Naive thymus-derived CD8-positive, alpha-beta T cell (primary cell): ENCODE measurements at regions of chr16 and their contacts with region 1.

Region 1: DNA sequence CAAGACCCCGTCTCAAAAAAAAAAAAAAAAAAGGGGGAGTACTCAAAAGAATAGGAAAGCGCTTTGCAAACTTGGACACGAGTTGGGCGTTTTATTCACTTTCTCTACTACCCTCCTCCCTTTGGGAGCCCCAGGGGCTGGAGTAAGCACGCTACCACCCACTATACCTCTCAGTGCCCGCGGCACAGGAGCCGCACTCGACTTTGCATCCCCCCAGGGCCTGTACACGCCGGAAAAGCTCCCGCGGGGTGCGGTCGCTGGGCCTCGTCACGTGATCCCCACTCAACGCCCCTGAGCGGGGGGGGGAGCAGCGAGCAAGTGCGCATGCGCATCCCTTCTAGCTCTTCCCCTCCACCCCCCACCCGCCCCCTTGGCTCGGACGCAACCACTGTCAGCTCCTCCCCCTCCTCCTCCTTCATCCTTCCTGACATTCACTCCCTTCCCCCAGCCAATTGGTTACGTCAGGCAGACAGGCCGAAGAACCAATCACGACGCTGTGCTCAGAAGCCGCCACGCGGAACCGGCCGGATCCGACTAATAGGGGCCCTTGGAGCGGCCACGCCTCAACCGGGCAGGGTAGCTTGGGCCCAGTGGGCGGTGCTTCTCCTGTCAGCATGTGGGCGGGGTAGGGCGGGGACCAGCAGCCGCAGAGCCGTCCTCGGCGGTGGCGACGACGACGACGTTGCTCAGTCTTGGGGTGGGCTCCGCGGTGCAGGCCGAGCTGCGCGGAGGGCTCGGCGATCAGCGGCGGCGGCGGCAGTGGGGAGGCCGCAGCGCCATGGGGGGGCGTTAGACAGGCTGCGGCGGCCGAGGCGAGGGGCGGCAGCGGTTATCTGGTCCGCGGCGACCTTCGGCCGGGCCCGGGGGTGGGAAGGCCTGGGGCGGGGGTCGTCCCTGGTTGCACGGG is at the start of gene HAPSTR1:
- DNase-seq: peak; percentile 91 to 100 (median 100)
- ATAC-seq: peak; percentile 84 to 89
- H3K4me3 Mint-ChIP-seq: peak within 1 kb of the TSS; percentile 95 to 100 (median 98)
- H3K27ac Mint-ChIP-seq: peak within 1 kb of the TSS; percentile 92 to 99 (median 99)
- H3K4me1 Mint-ChIP-seq: peaks cover 23 to 44% (median 36%) of the 10 kb centered on the region in 4 donors
- H3K27me3 Mint-ChIP-seq: peaks cover 0 to 4% (median 0%) of the 10 kb centered on the region in 5 donors
- polyA plus RNA-seq, gene HAPSTR1: 9.9 to 16.5 (median 10.6) TPM

Region 2: GRCh38 chr16:8868416-8869211 is 222.6 kb before region 1 on chr16 and contains the start of gene CARHSP1:
- POLR2A ChIA-PET with region 1: interaction called, 33 read pairs
- DNase-seq: peak; percentile 65 to 84 (median 77)
- ATAC-seq: peak; percentile 67 to 71
- H3K4me3 Mint-ChIP-seq: peak within 1 kb of the TSS; percentile 89 to 99 (median 95)
- H3K27ac Mint-ChIP-seq: peak within 1 kb of the TSS; percentile 87 to 95 (median 93)
- H3K4me1 Mint-ChIP-seq: peaks cover 31 to 63% (median 60%) of the 10 kb centered on the region in 4 donors
- H3K27me3 Mint-ChIP-seq: no peaks in the 10 kb centered on the region
- polyA plus RNA-seq, gene CARHSP1: 40.0 to 51.9 (median 48.5) TPM

Region 3: DNA sequence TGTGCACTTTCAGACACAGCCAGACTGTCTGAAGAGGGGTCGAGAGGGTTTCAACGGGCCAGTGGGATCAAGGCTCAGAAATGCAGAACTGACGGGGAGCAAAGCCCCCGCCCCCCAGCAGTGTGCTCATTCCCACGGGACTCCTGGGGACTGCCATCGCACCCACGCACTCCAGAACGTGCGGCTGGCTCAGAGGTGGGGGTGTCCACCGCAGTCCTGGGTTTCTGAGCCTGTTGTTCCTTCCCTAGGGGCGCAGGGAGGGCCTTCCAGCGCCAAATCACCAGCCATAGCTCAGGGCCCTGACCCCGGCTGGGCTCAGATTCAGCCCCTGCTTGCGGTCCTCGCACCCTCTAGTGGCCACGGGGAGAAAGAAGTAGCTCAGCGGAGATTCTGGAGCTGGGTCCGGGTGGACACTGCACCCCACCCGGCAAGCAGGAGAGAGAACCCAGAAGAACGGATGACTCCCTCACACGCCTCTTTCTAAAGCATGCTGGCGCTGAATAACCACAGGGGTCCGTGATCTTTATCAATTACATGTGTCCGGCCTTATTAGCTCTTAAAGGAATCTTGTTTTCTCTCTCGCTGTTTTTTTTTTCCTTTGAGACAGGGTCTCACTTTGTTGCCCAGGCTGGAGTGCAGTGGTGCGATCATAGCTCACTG is 82.5 kb before region 1 on chr16:
- POLR2A ChIA-PET with region 1: interaction called, 11 read pairs
- DNase-seq: peak; percentile 31 to 79 (median 55)
- ATAC-seq: peak; percentile 96 to 99
- H3K4me3 Mint-ChIP-seq: peak overlapping the region in 9 of 10 donors; percentile 30 to 59 (median 43)
- H3K27ac Mint-ChIP-seq: peak overlapping the region in 2 of 10 donors; percentile 20 to 40
- H3K4me1 Mint-ChIP-seq: peaks cover 0 to 8% (median 7%) of the 10 kb centered on the region in 4 donors
- H3K27me3 Mint-ChIP-seq: peaks cover 0 to 16% (median 8%) of the 10 kb centered on the region in 5 donors

Region 4: GRCh38 chr16:9107025-9107970 is 16.1 kb after region 1 on chr16:
- POLR2A ChIA-PET with region 1: interaction called, 68 read pairs
- DNase-seq: no peak
- ATAC-seq: no peak
- H3K4me3 Mint-ChIP-seq: peak overlapping the region in 9 of 10 donors; percentile 52 to 85 (median 64)
- H3K27ac Mint-ChIP-seq: peak overlapping the region; percentile 13 to 80 (median 46)
- H3K4me1 Mint-ChIP-seq: peaks cover 41 to 97% (median 92%) of the 10 kb centered on the region in 4 donors
- H3K27me3 Mint-ChIP-seq: no peaks in the 10 kb centered on the region

Region 5: DNA sequence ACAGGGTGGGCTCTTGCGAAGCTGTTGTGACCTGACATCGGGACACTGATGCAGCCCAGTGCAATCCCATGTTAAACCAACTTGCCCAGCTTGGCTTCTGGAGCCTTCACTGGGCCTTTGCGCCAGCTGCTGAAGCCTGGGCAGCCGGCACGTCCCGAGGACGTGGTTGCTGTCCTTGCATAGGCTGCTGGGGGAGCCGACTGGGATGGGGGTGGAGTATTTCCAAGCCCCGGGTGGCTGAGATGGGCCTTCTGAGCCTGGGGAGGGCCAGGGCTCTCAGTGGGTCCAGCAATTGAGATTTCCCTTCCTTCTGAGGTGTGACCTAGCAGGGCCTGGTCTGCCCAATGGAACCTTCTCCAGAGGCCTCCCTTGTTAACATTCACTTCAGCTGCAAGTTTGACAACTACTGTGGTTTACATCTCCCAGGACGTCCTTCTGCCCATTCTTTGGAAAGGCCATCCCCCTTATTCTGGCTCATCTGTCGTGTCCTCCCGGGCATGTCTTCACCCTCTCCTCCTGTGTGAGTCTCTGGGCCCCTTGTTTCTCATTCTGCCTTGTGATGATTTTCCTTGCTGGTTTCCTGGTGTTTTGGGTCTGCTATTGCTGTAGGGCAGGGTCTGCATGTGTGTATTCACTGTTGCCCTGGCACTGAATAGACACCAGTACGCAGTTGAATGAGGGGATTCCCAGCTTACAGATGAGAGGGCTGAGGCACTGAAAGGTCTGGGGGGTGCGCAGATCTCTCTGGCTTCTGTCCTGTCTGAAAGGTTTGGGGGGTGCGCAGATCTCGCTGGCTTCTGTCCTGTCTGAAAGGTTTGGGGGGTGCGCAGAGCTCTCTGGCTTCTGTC is 34.7 kb after region 1 on chr16:
- POLR2A ChIA-PET with region 1: interaction called, 15 read pairs
- DNase-seq: peak in 3 of 10 donors; percentile 29 to 34 (median 31)
- ATAC-seq: peak; percentile 33 to 67
- H3K4me3 Mint-ChIP-seq: peak overlapping the region in 4 of 10 donors; percentile 7 to 52 (median 28)
- H3K27ac Mint-ChIP-seq: peak overlapping the region; percentile 58 to 95 (median 86)
- H3K4me1 Mint-ChIP-seq: peaks cover 29 to 64% (median 57%) of the 10 kb centered on the region in 4 donors
- H3K27me3 Mint-ChIP-seq: no peaks in the 10 kb centered on the region